Left ventricle myocardium superior (tissue), 1 donor: ENCODE measurements at regions of chr1 and their contacts with region 1.

Region 1: GRCh38 chr1:56821140-56821797 is 2.1 kb upstream of the FYB2 start:
- DNase-seq: peak; percentile 89
- ATAC-seq: peak; percentile 62

Region 2: GRCh38 chr1:56758135-56758534 is 63.1 kb before region 1 on chr1:
- intact Hi-C with region 1: loop called (anchors 5 kb)
- DNase-seq: peak; percentile 53
- ATAC-seq: peak; percentile 84

Region 3: DNA sequence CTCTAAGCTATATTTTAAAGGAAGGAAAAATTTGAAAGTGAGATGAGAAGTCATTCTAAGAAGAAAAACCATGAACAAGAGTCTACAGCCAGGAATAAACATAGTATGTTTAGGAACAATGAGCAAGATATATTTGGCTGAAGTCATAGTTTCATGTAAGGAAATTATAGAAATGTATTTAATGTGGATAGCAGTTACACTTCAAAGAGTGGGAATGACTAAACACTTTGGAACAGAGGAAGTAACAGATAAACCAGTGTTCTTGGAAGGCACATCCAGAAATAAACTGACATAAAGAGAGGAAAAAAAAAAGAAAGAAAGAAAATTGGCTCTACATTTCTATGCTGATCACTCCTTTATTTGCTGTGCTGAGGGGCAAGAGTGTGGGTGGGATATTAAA is 51.3 kb after region 1 on chr1:
- intact Hi-C with region 1: no loop called
- DNase-seq: no peak
- ATAC-seq: no peak